Stomach (tissue), 19 donors: ENCODE measurements at regions of chr17 and their contacts with region 1.

Region 1: GRCh38 chr17:49556223-49556971 is 19.3 kb upstream of the NXPH3 start:
- DNase-seq: peak; percentile 83 to 94
- H3K4me3 ChIP-seq: no peak overlapping the region
- H3K27ac ChIP-seq: no peak overlapping the region
- H3K4me1 ChIP-seq: peaks cover 8 to 15% (median 11%) of the 10 kb centered on the region in 4 donors
- H3K27me3 ChIP-seq: peaks cover 0 to 22% (median 0%) of the 10 kb centered on the region in 3 donors
- CTCF ChIP-seq: peak in 5 of 7 experiments; percentile 90 to 99 (median 96)
- EP300 ChIP-seq: no peak
- POLR2A ChIP-seq: no peak

Region 2: GRCh38 chr17:49434821-49435670 is 121.4 kb before region 1 on chr17:
- intact Hi-C with region 1: loop called (anchors 5 kb)
- DNase-seq: peak; percentile 49 to 69
- H3K4me3 ChIP-seq: no peak overlapping the region
- H3K27ac ChIP-seq: no peak overlapping the region
- H3K4me1 ChIP-seq: peaks cover 0 to 6% (median 3%) of the 10 kb centered on the region in 4 donors
- H3K27me3 ChIP-seq: peaks cover 0 to 29% (median 24%) of the 10 kb centered on the region in 3 donors
- CTCF ChIP-seq: peak in 5 of 7 experiments; percentile 29 to 79 (median 57)
- EP300 ChIP-seq: no peak
- POLR2A ChIP-seq: no peak

Region 3: DNA sequence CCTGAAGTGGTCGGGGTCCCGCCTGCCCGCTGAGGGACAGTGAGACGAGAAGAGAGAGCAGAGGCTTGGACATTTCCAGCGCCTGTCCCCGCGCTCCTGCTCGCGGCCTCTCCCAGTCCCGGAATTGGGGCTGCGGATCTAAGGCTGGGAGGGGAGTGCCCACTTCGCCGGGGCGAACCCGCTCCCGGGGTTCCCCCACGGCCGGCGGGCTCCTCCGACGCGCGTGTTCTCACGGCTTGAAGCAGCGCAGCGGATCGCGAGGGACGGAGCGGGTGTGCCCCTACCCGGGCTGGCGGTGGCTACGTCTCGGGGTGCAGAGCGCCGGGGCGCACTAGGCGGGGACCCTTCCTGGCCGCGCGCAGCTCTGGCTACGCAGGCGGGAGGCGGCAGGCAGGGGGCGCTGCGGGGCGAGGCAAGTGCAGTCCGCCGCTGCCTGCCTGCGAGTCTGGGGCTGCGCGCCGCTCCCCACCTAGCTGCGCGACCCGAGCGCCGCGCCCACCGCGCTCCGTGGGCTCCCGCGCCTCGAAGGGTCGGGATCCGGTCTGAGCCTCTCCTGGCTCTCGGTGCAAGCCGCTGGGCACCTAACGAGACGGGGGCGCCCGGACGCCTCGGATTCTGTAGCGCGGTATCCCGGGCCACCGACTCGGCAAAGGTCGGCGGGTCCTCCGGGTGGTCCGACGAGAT is 60.1 kb before region 1 on chr17:
- intact Hi-C with region 1: loop called (anchors 5 kb)
- DNase-seq: peak; percentile 83 to 93
- H3K4me3 ChIP-seq: peak overlapping the region; percentile 48 to 59 (median 54)
- H3K27ac ChIP-seq: peak overlapping the region in 1 of 5 donors; percentile 76
- H3K4me1 ChIP-seq: peaks cover 30 to 39% (median 38%) of the 10 kb centered on the region in 4 donors
- H3K27me3 ChIP-seq: peaks cover 0 to 85% (median 66%) of the 10 kb centered on the region in 3 donors
- CTCF ChIP-seq: peak in 5 of 7 experiments; percentile 46 to 92 (median 80)
- EP300 ChIP-seq: no peak
- POLR2A ChIP-seq: no peak

Region 4: DNA sequence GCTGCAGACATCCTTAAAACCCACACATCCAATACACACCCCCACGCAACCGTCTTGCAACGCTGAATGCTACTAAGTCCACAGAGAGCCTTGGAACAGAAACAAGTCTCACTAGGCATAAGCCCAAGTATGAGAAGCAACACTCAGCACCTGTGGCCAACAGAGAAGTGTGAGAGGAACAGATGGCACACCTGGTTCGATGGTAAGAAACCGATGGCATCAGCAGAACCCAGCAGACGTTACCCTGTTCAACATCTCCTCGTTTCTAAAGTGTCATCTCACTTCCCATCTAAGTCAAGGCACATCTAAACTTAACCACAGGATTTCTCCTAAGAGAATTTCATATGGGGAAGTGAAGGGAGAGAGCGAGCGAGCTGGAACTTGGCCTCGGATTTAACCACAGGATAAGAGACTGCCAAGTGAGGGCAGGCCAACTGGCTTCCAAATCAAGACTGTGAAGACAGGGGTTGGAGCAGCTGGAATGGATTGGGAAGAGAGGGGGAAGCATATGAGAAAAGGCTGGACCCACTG is 60.3 kb after region 1 on chr17:
- intact Hi-C with region 1: no loop called
- DNase-seq: peak; percentile 48 to 52
- H3K4me3 ChIP-seq: no peak overlapping the region
- H3K27ac ChIP-seq: peak overlapping the region; percentile 45 to 77 (median 56)
- H3K4me1 ChIP-seq: peaks cover 18 to 63% (median 39%) of the 10 kb centered on the region in 4 donors
- H3K27me3 ChIP-seq: no peaks in the 10 kb centered on the region
- CTCF ChIP-seq: no peak
- EP300 ChIP-seq: no peak
- POLR2A ChIP-seq: no peak